ENCODE measurements at regions of chr7 and their contacts with region 1.

Region 1: GRCh38 chr7:105268511-105269392 is 120.0 kb downstream of the SRPK2 start:
- DNase-seq: peak; percentile 57
- ATAC-seq: peak; percentile 69
- H3K4me3 ChIP-seq: peak overlapping the region; percentile 20 to 73 (median 48)
- H3K4me3 Mint-ChIP-seq: peak overlapping the region; percentile 82
- H3K27ac ChIP-seq: peak overlapping the region; percentile 20 to 61
- H3K27ac Mint-ChIP-seq: peak overlapping the region; percentile 79
- H3K4me1 ChIP-seq: peaks cover 15 to 18% of the 10 kb centered on the region in 2 donors
- H3K4me1 Mint-ChIP-seq: peaks cover 53% of the 10 kb centered on the region
- H3K27me3 ChIP-seq: no peaks in the 10 kb centered on the region
- H3K27me3 Mint-ChIP-seq: no peaks in the 10 kb centered on the region
- CTCF ChIP-seq: no peak

Region 2: DNA sequence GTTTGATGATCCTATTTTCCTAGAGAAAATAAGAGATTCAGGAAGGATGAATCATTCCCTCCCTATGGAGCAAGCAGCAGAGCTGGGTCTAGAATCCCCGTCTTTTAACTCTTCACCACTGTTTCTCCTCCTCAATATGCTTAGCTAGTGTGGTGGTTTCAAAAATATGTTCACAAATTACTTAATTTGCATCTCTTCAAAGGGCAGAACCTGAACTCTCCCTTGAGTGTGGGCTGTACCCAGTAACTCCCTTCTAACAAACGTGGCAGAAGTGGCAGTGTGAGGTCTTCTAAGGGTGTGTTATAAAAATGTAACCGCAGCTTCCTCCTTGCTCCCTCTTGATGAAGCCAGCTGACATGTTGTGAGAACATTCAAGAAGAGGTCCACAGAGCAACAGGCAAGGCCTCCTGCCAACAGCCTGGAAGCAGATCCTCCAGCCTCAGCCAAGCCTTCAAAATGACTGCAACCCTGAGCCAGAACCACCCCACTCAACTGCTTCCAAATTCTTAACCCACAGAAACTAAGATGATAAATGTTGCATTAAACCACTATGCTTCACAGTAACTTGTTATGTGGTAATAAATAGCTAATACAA is 83.4 kb after region 1 on chr7:
- CTCF ChIA-PET with region 1: interaction called, 4 read pairs
- POLR2A ChIA-PET with region 1: interaction called, 5 read pairs
- intact Hi-C with region 1: loop called (anchors 2 kb)
- DNase-seq: peak; percentile 90
- ATAC-seq: peak; percentile 88
- H3K4me3 ChIP-seq: peak overlapping the region; percentile 0 to 41 (median 32)
- H3K4me3 Mint-ChIP-seq: peak overlapping the region; percentile 82
- H3K27ac ChIP-seq: peak overlapping the region; percentile 75 to 80
- H3K27ac Mint-ChIP-seq: peak overlapping the region; percentile 99
- H3K4me1 ChIP-seq: peaks cover 84 to 91% of the 10 kb centered on the region in 2 donors
- H3K4me1 Mint-ChIP-seq: peaks cover 64% of the 10 kb centered on the region
- H3K27me3 ChIP-seq: no peaks in the 10 kb centered on the region
- H3K27me3 Mint-ChIP-seq: no peaks in the 10 kb centered on the region
- CTCF ChIP-seq: no peak